ENCODE measurements at regions of chr9 and their contacts with region 1.

Region 1: GRCh38 chr9:73215249-73215648 is 63.6 kb downstream of the ANXA1 start:
- DNase-seq: peak; percentile 47
- ATAC-seq: peak; percentile 95
- H3K4me3 Mint-ChIP-seq: peak overlapping the region; percentile 59
- H3K27ac Mint-ChIP-seq: peak overlapping the region; percentile 98
- H3K4me1 Mint-ChIP-seq: peaks cover 38% of the 10 kb centered on the region
- H3K27me3 Mint-ChIP-seq: peaks cover 9% of the 10 kb centered on the region
- CTCF ChIP-seq: no peak

Region 2: GRCh38 chr9:73149371-73150067 is 65.7 kb before region 1 on chr9:
- CTCF ChIA-PET with region 1: no interaction called
- POLR2A ChIA-PET with region 1: no interaction called
- DNase-seq: no peak
- ATAC-seq: no peak
- H3K4me3 Mint-ChIP-seq: no peak overlapping the region
- H3K27ac Mint-ChIP-seq: peak overlapping the region; percentile 67; the same call in 1 of the 2 replicates
- H3K4me1 Mint-ChIP-seq: peaks cover 55% of the 10 kb centered on the region
- H3K27me3 Mint-ChIP-seq: no peaks in the 10 kb centered on the region
- CTCF ChIP-seq: no peak

Region 3: DNA sequence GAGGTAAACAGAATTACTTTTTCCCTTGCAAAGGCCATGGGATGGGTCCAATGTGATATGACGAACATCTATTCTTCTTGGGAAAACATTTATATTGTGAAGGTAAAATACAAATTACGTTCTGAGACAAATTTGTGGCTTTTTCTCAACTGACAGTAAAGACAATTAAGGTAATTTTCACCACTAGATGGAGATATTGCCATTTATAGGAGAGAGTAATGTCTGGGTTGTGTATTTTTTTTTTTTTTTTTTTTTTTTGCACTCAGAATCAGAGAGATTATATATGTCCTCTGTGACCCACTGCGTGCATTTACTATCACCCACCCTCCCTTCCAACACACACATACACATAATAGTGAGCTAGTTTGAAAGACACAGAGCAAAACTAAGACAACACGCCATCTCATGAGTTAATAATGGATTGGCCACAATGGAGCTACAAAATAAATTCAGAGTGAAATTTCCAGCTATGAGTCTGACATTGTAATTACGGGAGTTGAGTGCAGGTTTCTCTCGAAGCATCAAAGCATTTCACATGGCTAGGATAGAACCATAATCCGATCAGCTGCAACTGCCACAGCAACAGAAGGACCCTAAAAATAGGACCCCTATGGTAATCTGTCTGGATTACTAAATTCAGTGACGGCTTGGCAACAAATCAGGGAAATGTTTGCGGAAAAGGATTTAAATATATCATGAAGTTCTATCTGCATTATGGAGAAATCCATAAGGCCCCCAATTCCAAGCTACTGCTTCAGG is 14.4 kb before region 1 on chr9:
- CTCF ChIA-PET with region 1: interaction called, 12 read pairs
- POLR2A ChIA-PET with region 1: no interaction called
- DNase-seq: no peak
- ATAC-seq: peak; percentile 62; the same call in 1 of the 2 replicates
- H3K4me3 Mint-ChIP-seq: no peak overlapping the region
- H3K27ac Mint-ChIP-seq: no peak overlapping the region
- H3K4me1 Mint-ChIP-seq: peaks cover 12% of the 10 kb centered on the region
- H3K27me3 Mint-ChIP-seq: no peaks in the 10 kb centered on the region
- CTCF ChIP-seq: peak; percentile 29; the same call in 1 of the 2 replicates